Activated CD4-positive, alpha-beta memory T cell treated with anti-CD3 and anti-CD28 coated beads for 36 hours (primary cell): ENCODE measurements at regions of chr13 and their contacts with region 1.

Region 1: GRCh38 chr13:51797664-51798488 is 6.1 kb downstream of the DHRS12 start:
- DNase-seq: peak; percentile 76
- H3K4me3 Mint-ChIP-seq: no peak overlapping the region
- H3K27ac Mint-ChIP-seq: no peak overlapping the region
- H3K4me1 Mint-ChIP-seq: peaks cover 43% of the 10 kb centered on the region
- H3K27me3 Mint-ChIP-seq: no peaks in the 10 kb centered on the region

Region 2: DNA sequence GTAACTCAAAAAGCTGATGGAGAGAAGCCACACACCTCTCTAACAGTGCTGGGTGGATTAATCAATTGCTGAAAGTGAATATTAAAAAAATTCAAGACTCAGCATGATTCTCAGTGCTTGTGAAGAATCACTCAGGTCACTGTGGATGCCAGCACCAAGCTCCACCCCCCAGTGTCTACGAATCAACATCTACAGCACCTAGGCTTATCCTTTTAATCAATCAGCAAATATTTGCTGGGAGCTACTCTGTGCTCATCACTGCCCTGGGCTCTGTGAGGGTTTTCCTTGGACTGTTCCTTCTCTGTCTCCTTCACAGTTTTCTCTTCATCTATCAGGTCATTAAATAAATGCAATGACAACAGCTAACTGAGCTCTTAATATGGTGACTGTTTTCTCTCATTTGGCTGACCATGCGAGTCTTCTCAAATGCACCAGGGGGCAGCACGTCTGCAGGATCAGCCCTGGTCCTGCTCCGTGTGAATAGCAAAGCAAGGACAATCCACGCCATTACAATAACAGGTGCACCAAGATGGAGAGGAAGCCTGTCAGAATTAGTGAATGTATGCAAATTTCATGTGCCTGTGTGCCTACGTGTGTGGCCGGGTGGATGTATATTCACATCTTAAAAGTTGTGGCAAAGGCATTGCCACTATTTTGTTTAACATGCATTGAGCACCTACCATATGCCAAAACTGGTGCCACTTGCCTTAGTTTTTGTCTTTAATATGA is 672.2 kb before region 1 on chr13:
- CTCF ChIA-PET with region 1: interaction called, 25 read pairs
- POLR2A ChIA-PET with region 1: no interaction called
- intact Hi-C with region 1: loop called (anchors 1 kb)
- DNase-seq: peak; percentile 60
- H3K4me3 Mint-ChIP-seq: no peak overlapping the region
- H3K27ac Mint-ChIP-seq: no peak overlapping the region
- H3K4me1 Mint-ChIP-seq: peaks cover 16% of the 10 kb centered on the region
- H3K27me3 Mint-ChIP-seq: peaks cover 15% of the 10 kb centered on the region

Region 3: DNA sequence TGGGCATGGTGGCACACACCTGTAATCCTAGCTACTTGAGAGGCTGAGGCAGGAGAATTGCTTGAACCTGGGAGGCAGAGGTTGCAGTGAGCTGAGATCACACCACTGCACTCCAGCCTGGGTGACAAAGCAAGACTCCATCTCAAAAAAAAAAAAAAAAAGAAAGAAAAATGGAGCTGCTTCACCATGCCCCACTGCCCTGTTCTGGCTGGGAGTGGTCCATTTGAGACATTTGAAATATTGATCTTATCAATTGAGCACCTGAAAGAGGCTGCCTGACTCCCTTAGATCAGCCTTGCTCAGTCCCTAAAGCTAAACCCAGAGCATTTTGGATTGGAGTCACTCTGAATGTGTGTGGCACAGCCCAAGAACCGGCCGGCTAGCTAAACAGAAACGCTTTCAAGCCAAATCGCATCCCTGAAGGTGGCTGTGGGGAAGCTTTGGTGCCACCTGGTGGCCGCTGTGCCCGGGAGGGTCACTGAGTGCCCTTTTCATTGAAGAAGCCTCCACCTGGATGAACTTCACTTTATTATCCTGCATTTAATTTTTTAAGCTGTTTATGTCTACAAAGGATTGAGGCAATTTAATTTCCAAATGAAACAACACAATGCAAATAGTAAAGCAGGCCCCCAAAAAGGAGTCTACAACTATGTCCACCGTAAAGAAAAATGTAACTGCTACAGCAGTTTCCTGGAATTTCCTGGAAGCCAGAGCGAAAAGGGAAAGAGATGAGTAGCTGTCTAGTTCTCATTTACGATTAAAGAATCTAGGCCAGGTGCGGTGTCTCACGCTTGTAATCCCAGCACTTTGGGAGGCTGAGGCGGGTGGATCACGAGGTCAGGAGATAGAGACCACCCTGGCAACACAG is 511.5 kb before region 1 on chr13:
- CTCF ChIA-PET with region 1: interaction called, 35 read pairs
- POLR2A ChIA-PET with region 1: no interaction called
- intact Hi-C with region 1: loop called (anchors 5 kb)
- DNase-seq: peak; percentile 85
- H3K4me3 Mint-ChIP-seq: no peak overlapping the region
- H3K27ac Mint-ChIP-seq: no peak overlapping the region
- H3K4me1 Mint-ChIP-seq: no peaks in the 10 kb centered on the region
- H3K27me3 Mint-ChIP-seq: no peaks in the 10 kb centered on the region

Region 4: DNA sequence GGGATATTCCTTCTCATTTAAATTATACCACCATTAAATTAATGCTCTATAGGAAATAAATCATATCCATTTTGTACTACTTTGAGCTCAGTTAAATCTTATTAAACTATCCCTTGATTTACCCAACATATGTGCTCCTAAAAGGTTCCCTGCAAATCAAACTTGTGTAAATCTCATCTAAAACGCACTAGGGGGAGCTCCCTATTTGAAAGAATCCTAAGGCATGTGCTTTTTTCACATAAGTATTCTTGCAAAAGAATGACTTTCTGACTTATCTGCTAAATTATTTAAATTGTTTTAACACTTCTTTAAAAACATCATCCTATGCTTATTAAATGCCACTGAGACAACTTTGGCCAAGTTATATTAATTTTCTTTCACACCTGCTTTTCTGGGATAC is 353.0 kb before region 1 on chr13:
- CTCF ChIA-PET with region 1: interaction called, 17 read pairs
- POLR2A ChIA-PET with region 1: no interaction called
- intact Hi-C with region 1: no loop called
- DNase-seq: no peak
- H3K4me3 Mint-ChIP-seq: no peak overlapping the region
- H3K27ac Mint-ChIP-seq: no peak overlapping the region
- H3K4me1 Mint-ChIP-seq: peaks cover 18% of the 10 kb centered on the region
- H3K27me3 Mint-ChIP-seq: no peaks in the 10 kb centered on the region

Region 5: DNA sequence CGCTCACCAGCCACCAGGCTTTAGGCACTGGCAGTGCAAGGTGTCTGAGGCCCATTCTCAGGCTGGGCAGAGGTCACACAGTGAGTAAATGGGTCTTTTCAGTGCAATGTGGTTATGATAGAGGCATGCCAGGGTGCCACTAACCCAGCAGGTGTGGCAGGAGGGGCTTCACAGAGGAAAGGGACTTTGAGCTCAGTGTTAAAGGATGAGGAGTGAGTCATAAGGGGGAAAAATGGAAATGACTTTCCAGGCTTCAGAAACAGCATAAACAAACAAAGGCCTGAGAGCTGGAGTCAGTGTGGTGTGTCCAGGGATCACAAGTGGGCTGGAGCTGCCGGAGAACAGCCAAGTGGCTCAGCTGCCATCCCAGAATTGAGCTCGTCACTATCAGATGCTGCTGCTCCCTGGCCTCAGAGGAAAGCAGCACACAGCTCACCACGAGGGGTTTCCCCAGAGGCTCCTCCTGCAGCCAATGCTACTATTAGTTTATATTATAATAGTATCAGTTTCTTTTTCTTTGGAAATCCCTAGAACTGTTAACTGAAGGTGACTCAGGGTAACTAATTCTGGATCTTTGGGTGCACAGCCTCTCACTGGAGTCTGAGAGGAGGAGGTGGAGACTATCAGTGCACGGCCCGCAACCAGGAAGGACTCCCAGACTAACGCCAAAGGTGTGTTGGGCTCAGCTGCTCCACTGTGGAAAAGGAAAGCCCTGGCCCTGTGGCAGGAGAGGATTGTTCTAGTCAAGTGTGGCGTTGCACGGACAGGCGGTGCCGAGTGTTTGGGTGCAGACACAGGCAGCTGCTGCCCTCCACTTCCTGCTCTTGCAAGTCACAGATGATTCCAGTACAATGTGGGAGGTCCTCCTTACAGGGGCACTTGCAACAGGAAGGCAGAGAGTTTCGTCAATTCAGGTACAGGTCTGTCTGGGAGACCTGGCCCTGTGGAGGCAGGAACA is 33.4 kb before region 1 on chr13:
- CTCF ChIA-PET with region 1: interaction called, 10 read pairs
- POLR2A ChIA-PET with region 1: interaction called, 7 read pairs
- intact Hi-C with region 1: loop called (anchors 1 kb)
- DNase-seq: peak; percentile 81
- H3K4me3 Mint-ChIP-seq: peak overlapping the region; percentile 77
- H3K27ac Mint-ChIP-seq: peak overlapping the region; percentile 95
- H3K4me1 Mint-ChIP-seq: peaks cover 42% of the 10 kb centered on the region
- H3K27me3 Mint-ChIP-seq: no peaks in the 10 kb centered on the region

Region 6: GRCh38 chr13:51814825-51815650 is 17.2 kb after region 1 on chr13:
- CTCF ChIA-PET with region 1: interaction called, 17 read pairs
- POLR2A ChIA-PET with region 1: interaction called, 4 read pairs
- intact Hi-C with region 1: loop called (anchors 1 kb)
- DNase-seq: peak; percentile 88
- H3K4me3 Mint-ChIP-seq: peak overlapping the region; percentile 48
- H3K27ac Mint-ChIP-seq: peak overlapping the region; percentile 66
- H3K4me1 Mint-ChIP-seq: peaks cover 67% of the 10 kb centered on the region
- H3K27me3 Mint-ChIP-seq: no peaks in the 10 kb centered on the region

Region 7: DNA sequence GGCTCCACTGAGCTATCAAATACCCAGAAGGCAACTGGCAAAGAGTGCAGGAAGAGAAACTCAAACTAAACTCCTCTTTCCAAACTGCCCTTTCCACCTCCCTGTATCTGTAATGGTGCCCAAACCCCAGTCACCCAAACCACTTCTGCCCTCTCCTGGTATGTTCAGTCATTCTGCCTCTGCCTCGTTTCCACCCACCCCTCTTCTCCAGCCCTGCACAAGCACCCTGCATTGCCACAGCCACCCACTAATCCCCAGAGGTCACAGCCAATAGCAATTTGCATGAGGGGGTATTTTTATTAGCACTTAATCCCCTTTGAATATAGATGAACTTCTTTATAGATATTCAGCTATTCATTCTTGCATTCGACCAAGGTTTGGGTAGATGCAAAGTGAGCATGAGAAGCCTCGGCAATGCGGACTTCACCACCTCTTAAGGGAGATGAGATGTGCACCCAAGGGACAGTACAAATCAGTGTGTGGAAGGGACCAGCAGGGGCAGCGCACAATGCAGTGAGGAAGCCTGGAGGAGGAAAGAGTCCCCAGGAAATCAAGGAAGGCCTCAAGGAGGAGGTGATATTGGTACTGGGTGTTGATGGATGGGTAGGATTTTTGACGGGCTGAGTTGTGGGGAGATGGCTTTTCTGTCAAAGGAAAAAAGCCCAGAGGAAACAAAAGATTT is 34.7 kb after region 1 on chr13:
- CTCF ChIA-PET with region 1: interaction called, 15 read pairs
- POLR2A ChIA-PET with region 1: no interaction called
- intact Hi-C with region 1: no loop called
- DNase-seq: peak; percentile 74
- H3K4me3 Mint-ChIP-seq: peak overlapping the region; percentile 24
- H3K27ac Mint-ChIP-seq: peak overlapping the region; percentile 40
- H3K4me1 Mint-ChIP-seq: peaks cover 29% of the 10 kb centered on the region
- H3K27me3 Mint-ChIP-seq: no peaks in the 10 kb centered on the region

Region 8: DNA sequence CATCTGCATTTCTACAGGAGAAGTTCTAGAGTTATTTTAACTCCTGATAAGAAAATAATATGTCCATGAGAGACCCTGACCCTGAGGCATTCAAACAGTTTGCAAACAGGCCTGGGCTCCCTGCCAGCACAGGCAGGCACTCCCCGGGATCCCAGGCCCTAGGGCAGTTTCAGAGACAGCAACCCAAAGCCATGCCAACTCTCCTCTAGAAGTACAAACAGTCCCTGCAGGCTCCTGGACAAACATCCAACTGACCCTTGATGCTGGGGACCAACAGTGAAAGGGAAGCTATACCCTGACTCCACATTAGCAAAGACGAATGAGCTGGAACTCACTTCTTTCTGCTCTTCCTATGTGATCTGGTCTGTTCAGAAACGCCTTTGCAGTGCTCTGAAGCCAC is 108.7 kb after region 1 on chr13:
- CTCF ChIA-PET with region 1: no interaction called
- POLR2A ChIA-PET with region 1: no interaction called
- intact Hi-C with region 1: no loop called
- DNase-seq: no peak
- H3K4me3 Mint-ChIP-seq: no peak overlapping the region
- H3K27ac Mint-ChIP-seq: no peak overlapping the region
- H3K4me1 Mint-ChIP-seq: peaks cover 30% of the 10 kb centered on the region
- H3K27me3 Mint-ChIP-seq: peaks cover 15% of the 10 kb centered on the region

Region 9: DNA sequence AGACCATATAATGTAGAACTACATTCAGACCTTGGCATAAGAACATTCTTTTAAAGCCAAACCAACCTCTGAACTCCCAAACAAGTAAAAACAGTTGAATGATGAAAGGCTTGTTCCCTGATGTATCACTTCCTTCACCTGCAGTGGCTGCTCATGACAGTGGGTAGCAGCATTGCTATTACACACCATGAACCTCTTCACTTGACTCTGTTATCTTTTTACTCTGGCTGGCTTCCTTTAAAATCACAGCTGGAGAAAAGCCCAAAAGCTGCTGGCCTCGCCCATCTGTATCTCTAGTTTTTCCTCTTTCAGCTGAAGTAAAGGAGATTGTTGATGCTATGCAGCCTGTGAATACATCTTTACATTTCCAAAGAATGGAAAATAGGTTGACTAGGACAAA is 585.5 kb after region 1 on chr13:
- CTCF ChIA-PET with region 1: no interaction called
- POLR2A ChIA-PET with region 1: no interaction called
- intact Hi-C with region 1: no loop called
- DNase-seq: no peak
- H3K4me3 Mint-ChIP-seq: no peak overlapping the region
- H3K27ac Mint-ChIP-seq: no peak overlapping the region
- H3K4me1 Mint-ChIP-seq: no peaks in the 10 kb centered on the region
- H3K27me3 Mint-ChIP-seq: no peaks in the 10 kb centered on the region